ENCODE measurements at regions of chr10 and their contacts with region 1.

Region 1: GRCh38 chr10:3239066-3239919 is 66.7 kb upstream of the PITRM1 start:
- DNase-seq: peak in 1 of 2 experiments; percentile 79
- H3K4me3 ChIP-seq: no peak overlapping the region
- H3K27ac ChIP-seq: no peak overlapping the region
- H3K4me1 ChIP-seq: no peaks in the 10 kb centered on the region
- H3K27me3 ChIP-seq: no peaks in the 10 kb centered on the region
- CTCF ChIP-seq: peak; percentile 67

Region 2: DNA sequence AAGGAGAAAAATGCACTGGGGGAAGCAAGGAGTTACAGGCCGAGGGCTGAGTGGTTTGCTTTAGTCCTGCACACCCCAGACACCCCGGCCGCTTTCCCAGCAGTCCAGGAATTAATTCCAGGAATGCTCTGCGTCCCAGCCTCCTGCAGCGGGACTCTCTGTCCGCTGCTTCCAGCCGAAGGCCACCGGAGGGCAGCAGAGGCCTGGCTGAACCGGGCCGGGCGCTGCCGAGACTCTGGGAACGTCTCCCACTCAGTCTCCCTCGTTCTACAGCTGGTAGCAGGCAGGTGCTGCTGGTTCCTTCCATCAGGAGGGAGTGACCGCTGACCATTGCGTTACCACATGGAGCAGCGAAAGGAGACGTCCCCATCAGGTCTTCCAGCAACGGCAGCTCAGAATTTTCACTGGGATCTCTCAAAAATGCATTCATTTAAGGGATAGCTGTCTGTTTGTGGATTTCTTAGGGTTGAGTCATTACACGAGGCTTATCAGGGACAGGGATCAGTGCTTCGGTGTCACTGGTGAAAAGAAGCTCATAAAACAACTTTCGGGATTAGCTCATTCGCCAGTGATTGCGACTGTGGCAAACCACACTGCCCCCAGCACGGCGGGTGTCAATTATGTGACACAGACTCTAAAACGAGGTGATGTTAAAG is 41.8 kb before region 1 on chr10:
- CTCF ChIA-PET with region 1: interaction called, 3 read pairs
- POLR2A ChIA-PET with region 1: no interaction called
- intact Hi-C with region 1: loop called (anchors 5 kb)
- DNase-seq: peak; percentile 85 to 86
- H3K4me3 ChIP-seq: peak overlapping the region; percentile 53; the same call in 1 of the 2 replicates
- H3K27ac ChIP-seq: peak overlapping the region; percentile 79
- H3K4me1 ChIP-seq: peaks cover 10% of the 10 kb centered on the region
- H3K27me3 ChIP-seq: no peaks in the 10 kb centered on the region
- CTCF ChIP-seq: peak; percentile 79

Region 3: GRCh38 chr10:4250587-4250887 is 1011.2 kb after region 1 on chr10:
- CTCF ChIA-PET with region 1: no interaction called
- POLR2A ChIA-PET with region 1: interaction called, 21 read pairs
- intact Hi-C with region 1: no loop called
- DNase-seq: no peak
- H3K4me3 ChIP-seq: no peak overlapping the region
- H3K27ac ChIP-seq: no peak overlapping the region
- H3K4me1 ChIP-seq: no peaks in the 10 kb centered on the region
- H3K27me3 ChIP-seq: no peaks in the 10 kb centered on the region
- CTCF ChIP-seq: no peak